HepG2 (cell line): ENCODE measurements at regions of chr19 and their contacts with region 1.

Region 1: GRCh38 chr19:7652061-7652641 is 15.2 kb downstream of the STXBP2 start:
- DNase-seq: peak; percentile 96
- ATAC-seq: peak; percentile 88
- H3K4me3 ChIP-seq: peak overlapping the region in 1 of 3 experiments; percentile 31; a peak in 1 of 6 replicates
- H3K27ac ChIP-seq: peak overlapping the region; percentile 58
- H3K4me1 ChIP-seq: peaks cover 17% of the 10 kb centered on the region
- H3K27me3 ChIP-seq: no peaks in the 10 kb centered on the region
- CTCF ChIP-seq: peak; percentile 89
- EP300 ChIP-seq: peak; percentile 72 to 81; a peak in 3 of 4 replicates
- POLR2A ChIP-seq: no peak
- RAD21 ChIP-seq: peak; percentile 79

Region 2: GRCh38 chr19:7767487-7767886 is 115.3 kb after region 1 on chr19:
- CTCF ChIA-PET with region 1: no interaction called
- POLR2A ChIA-PET with region 1: no interaction called
- in situ Hi-C with region 1: no loop called
- intact Hi-C with region 1: loop called (anchors 1 kb)
- DNase-seq: no peak
- ATAC-seq: no peak
- H3K4me3 ChIP-seq: no peak overlapping the region
- H3K27ac ChIP-seq: no peak overlapping the region
- H3K4me1 ChIP-seq: no peaks in the 10 kb centered on the region
- H3K27me3 ChIP-seq: peaks cover 4 to 10% of the 10 kb centered on the region in 2 experiments; a peak in 2 of 5 replicates
- CTCF ChIP-seq: no peak
- EP300 ChIP-seq: no peak
- POLR2A ChIP-seq: no peak
- RAD21 ChIP-seq: no peak

Region 3: DNA sequence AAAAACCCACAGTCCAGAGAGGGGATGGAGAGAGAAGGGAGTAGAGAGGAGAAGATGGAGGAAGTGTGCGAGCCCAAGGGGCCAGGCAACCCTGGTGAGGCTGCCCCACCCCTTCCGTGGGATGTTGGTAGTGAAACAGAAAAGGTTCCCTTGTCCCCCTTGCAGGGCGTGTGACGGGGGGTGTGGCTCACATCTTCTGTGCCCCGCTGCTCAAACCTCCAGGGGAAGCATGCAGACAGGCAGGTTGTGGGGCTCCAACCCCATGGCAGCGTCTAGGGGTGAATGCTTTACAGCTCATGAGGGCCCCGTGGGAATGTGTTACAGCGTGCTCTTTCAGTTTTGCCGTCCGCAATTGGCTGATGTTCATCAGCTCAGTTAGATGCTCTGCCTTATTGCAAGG is 163.2 kb after region 1 on chr19:
- CTCF ChIA-PET with region 1: no interaction called
- POLR2A ChIA-PET with region 1: no interaction called
- in situ Hi-C with region 1: no loop called
- intact Hi-C with region 1: no loop called
- DNase-seq: no peak
- ATAC-seq: no peak
- H3K4me3 ChIP-seq: no peak overlapping the region
- H3K27ac ChIP-seq: no peak overlapping the region
- H3K4me1 ChIP-seq: no peaks in the 10 kb centered on the region
- H3K27me3 ChIP-seq: peaks cover 0 to 3% of the 10 kb centered on the region in 2 experiments; a peak in 2 of 5 replicates
- CTCF ChIP-seq: no peak
- EP300 ChIP-seq: no peak
- POLR2A ChIP-seq: no peak
- RAD21 ChIP-seq: no peak